Activated CD4-positive, alpha-beta memory T cell treated with anti-CD3 and anti-CD28 coated beads for 36 hours (primary cell): ENCODE measurements at regions of chr10 and their contacts with region 1.

Region 1: GRCh38 chr10:21746118-21746517 is 212.1 kb downstream of the MLLT10 start:
- DNase-seq: peak; percentile 35
- H3K4me3 Mint-ChIP-seq: no peak overlapping the region
- H3K27ac Mint-ChIP-seq: peak overlapping the region; percentile 34
- H3K4me1 Mint-ChIP-seq: peaks cover 18% of the 10 kb centered on the region
- H3K27me3 Mint-ChIP-seq: no peaks in the 10 kb centered on the region

Region 2: GRCh38 chr10:20785174-20785573 is 960.9 kb before region 1 on chr10:
- CTCF ChIA-PET with region 1: no interaction called
- POLR2A ChIA-PET with region 1: no interaction called
- intact Hi-C with region 1: no loop called
- DNase-seq: no peak
- H3K4me3 Mint-ChIP-seq: no peak overlapping the region
- H3K27ac Mint-ChIP-seq: no peak overlapping the region
- H3K4me1 Mint-ChIP-seq: no peaks in the 10 kb centered on the region
- H3K27me3 Mint-ChIP-seq: no peaks in the 10 kb centered on the region

Region 3: DNA sequence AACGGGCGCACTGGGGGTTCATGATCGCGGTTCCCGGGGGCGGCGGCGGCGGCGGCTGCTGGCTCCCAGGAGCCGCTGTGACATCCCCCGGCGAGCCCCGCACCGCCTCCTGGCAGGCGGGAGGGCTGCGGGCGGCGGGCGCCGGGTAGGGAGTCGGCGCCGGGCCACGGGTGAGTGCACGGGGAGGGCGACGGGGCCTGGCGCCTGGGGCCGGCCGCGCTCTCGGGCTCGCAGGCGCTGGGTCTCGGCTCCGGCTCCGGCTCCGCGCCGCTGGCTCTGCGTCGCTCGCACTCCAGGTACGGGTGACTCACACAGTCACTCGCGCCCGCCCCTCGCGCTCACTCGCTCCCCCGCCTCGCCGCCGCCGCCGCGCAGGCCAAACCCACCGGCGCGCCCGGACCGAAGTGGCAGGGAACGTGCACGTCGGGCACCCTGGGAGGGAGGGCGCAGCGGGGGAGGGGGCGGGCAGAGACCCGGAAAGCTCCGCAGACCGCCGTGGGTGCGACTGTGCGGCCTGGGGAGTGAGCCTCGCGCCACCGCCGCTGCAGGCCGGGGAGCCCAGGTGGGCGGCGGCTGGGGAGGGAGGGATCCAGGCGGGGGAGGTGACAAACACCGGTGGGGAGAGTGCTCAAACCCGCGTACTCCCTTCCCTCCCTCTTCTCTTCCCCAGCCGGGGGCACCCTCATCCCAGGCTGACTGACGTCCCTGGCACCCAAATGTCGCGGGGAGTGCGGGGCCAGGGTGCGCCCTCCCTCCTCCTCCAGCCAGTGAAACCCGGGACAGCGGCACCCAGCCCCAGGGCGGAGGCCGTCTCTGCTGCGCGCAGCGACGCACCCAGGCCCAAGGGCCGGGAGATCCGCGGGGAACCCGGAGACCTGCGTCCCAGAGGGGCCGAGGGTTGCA is 572.1 kb before region 1 on chr10:
- CTCF ChIA-PET with region 1: no interaction called
- POLR2A ChIA-PET with region 1: no interaction called
- intact Hi-C with region 1: loop called (anchors 10 kb)
- DNase-seq: peak; percentile 36
- H3K4me3 Mint-ChIP-seq: no peak overlapping the region
- H3K27ac Mint-ChIP-seq: no peak overlapping the region
- H3K4me1 Mint-ChIP-seq: peaks cover 2% of the 10 kb centered on the region
- H3K27me3 Mint-ChIP-seq: peaks cover 34% of the 10 kb centered on the region

Region 4: GRCh38 chr10:21584834-21585530 is 161.1 kb before region 1 on chr10:
- CTCF ChIA-PET with region 1: no interaction called
- POLR2A ChIA-PET with region 1: no interaction called
- intact Hi-C with region 1: no loop called
- DNase-seq: no peak
- H3K4me3 Mint-ChIP-seq: peak overlapping the region; percentile 16
- H3K27ac Mint-ChIP-seq: no peak overlapping the region
- H3K4me1 Mint-ChIP-seq: peaks cover 52% of the 10 kb centered on the region
- H3K27me3 Mint-ChIP-seq: no peaks in the 10 kb centered on the region

Region 5: DNA sequence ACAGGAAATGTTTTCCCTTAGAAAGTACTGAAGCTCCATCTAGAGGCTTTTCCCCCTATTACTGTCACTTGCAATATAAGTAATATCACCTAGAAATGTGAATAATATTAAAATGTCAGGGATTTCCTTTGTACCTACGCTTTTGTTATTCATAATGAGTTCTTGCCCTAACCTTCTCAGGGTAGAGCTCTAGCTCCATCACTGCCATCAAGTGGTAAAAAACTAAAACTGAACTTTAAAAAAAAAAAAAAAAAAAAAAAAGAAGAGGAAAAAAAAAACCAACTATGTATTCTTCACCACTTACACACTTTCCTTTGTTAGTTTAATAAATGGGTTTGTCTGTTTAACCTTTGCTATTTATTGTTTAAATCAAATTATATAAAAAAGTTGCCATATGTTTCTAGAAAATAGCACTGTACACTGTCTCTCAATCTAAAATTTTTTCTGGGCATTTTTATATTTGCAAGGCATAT is 207.5 kb after region 1 on chr10:
- CTCF ChIA-PET with region 1: no interaction called
- POLR2A ChIA-PET with region 1: no interaction called
- intact Hi-C with region 1: loop called (anchors 10 kb)
- DNase-seq: no peak
- H3K4me3 Mint-ChIP-seq: no peak overlapping the region
- H3K27ac Mint-ChIP-seq: no peak overlapping the region
- H3K4me1 Mint-ChIP-seq: peaks cover 2% of the 10 kb centered on the region
- H3K27me3 Mint-ChIP-seq: no peaks in the 10 kb centered on the region